ENCODE measurements at regions of chr18 and their contacts with region 1.

Region 1: GRCh38 chr18:6729247-6730091 is at the start of gene ARHGAP28:
- DNase-seq: peak; percentile 82 to 98 (median 94)
- ATAC-seq: peak; percentile 93
- H3K4me3 ChIP-seq: peak within 1 kb of the TSS; percentile 46 to 51
- H3K27ac ChIP-seq: peak within 1 kb of the TSS; percentile 71 to 85
- H3K4me1 ChIP-seq: no peaks in the 10 kb centered on the region
- H3K27me3 ChIP-seq: peaks cover 0 to 10% of the 10 kb centered on the region in 2 donors
- CTCF ChIP-seq: peak in 1 of 2 donors; percentile 23
- polyA plus RNA-seq, gene ARHGAP28: 177 to 262 (median 223) TPM

Region 2: GRCh38 chr18:6543330-6543908 is 186.1 kb before region 1 on chr18:
- intact Hi-C with region 1: loop called in 1 of 2 experiments (anchors 10 kb)
- DNase-seq: peak in 1 of 4 donors; percentile 57
- ATAC-seq: peak; percentile 51
- H3K4me3 ChIP-seq: no peak overlapping the region
- H3K27ac ChIP-seq: no peak overlapping the region
- H3K4me1 ChIP-seq: no peaks in the 10 kb centered on the region
- H3K27me3 ChIP-seq: no peaks in the 10 kb centered on the region
- CTCF ChIP-seq: peak; percentile 27 to 48

Region 3: GRCh38 chr18:6878556-6879297 is 149.3 kb after region 1 on chr18:
- intact Hi-C with region 1: loop called in 1 of 2 experiments (anchors 10 kb)
- DNase-seq: no peak
- ATAC-seq: peak; percentile 27
- H3K4me3 ChIP-seq: no peak overlapping the region
- H3K27ac ChIP-seq: peak overlapping the region in 1 of 2 donors; percentile 44
- H3K4me1 ChIP-seq: no peaks in the 10 kb centered on the region
- H3K27me3 ChIP-seq: no peaks in the 10 kb centered on the region
- CTCF ChIP-seq: no peak

Measured in left lung (tissue), 14 donors.